ENCODE measurements at regions of chr5 and their contacts with region 1.

Region 1: DNA sequence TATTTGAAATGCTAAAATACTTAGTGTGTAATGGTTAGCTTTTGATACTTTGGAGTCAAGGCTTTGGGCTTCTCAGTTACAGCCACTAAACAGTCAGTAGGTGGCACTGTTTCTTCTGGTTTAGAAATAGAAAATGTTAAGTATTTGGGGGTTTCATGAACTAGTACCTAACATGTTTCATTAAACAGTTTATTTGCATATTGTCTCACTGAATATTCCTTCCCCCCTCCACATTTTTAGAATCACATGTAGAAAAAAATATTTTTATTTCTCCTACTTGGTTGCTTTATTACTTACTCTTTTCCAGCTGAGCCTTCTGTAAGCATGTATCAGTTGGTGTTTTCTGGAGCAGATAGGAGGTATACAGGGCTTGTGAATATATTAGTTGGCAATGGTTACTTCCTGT is 48.0 kb downstream of the IPO11 start:
- DNase-seq: no peak
- ATAC-seq: peak in 3 of 4 donors; percentile 62 to 72 (median 64)
- H3K4me3 ChIP-seq: no peak overlapping the region
- H3K27ac ChIP-seq: no peak overlapping the region
- H3K4me1 ChIP-seq: no peaks in the 10 kb centered on the region
- H3K27me3 ChIP-seq: no peaks in the 10 kb centered on the region
- CTCF ChIP-seq: peak; percentile 29 to 68 (median 46)

Region 2: GRCh38 chr5:62593331-62593730 is 132.8 kb after region 1 on chr5:
- intact Hi-C with region 1: no loop called
- DNase-seq: no peak
- ATAC-seq: no peak
- H3K4me3 ChIP-seq: no peak overlapping the region
- H3K27ac ChIP-seq: no peak overlapping the region
- H3K4me1 ChIP-seq: no peaks in the 10 kb centered on the region
- H3K27me3 ChIP-seq: no peaks in the 10 kb centered on the region
- CTCF ChIP-seq: no peak

Region 3: GRCh38 chr5:62779010-62779422 is 318.4 kb after region 1 on chr5:
- intact Hi-C with region 1: loop called in 1 of 3 experiments (anchors 10 kb)
- DNase-seq: no peak
- ATAC-seq: peak; percentile 63 to 92 (median 88)
- H3K4me3 ChIP-seq: no peak overlapping the region
- H3K27ac ChIP-seq: no peak overlapping the region
- H3K4me1 ChIP-seq: no peaks in the 10 kb centered on the region
- H3K27me3 ChIP-seq: no peaks in the 10 kb centered on the region
- CTCF ChIP-seq: peak; percentile 29 to 64 (median 51)

Measured in pancreas (tissue), 10 donors.